ENCODE measurements at regions of chr3 and their contacts with region 1.

Region 1: DNA sequence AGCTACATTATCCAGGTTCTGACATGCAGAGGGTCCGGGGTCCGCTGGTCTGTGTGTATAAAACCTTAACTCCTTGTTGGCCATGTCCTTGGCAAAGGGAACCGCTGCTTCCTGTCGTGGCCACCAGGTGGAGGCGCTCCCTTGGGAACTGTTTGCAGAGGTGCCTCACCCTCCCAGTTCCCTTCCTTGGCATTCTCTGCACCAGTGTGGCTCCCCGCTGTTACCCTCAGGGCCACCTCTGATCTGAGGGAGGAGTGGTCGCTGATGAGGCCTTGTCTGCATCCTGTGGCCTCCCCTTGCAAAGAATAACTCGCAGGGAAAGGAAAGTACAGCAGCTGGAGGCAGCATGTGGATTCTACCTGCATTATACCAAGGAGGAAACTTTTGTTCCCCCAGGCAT is 89.6 kb downstream of the CHRD start:
- DNase-seq: peak; percentile 35
- H3K4me3 ChIP-seq: no peak overlapping the region
- H3K27ac ChIP-seq: no peak overlapping the region
- H3K4me1 ChIP-seq: peaks cover 10% of the 10 kb centered on the region
- H3K27me3 ChIP-seq: no peaks in the 10 kb centered on the region
- CTCF ChIP-seq: peak; percentile 84 to 97

Region 2: DNA sequence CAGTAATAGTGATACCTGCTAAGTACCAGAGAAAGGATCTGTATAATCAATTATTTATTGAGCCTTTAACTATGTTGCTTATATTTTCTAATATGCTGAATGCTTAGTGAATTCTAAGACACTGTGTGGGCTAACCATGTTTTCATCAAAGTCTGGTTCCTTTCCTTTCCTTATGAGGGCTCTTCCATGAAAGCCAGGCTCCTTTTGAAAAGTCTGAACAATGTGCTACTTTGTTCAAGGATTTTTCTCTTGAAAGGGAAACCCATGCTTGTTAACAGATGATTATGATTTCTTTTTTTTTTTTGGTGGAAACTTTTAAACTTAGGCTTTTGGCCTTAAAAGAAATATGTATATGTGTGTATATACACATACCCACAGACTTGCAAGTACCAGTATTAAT is 754.8 kb before region 1 on chr3:
- CTCF ChIA-PET with region 1: no interaction called
- dilution Hi-C with region 1: no loop called
- in situ Hi-C with region 1: no loop called
- intact Hi-C with region 1: no loop called
- DNase-seq: no peak
- H3K4me3 ChIP-seq: no peak overlapping the region
- H3K27ac ChIP-seq: no peak overlapping the region
- H3K4me1 ChIP-seq: no peaks in the 10 kb centered on the region
- H3K27me3 ChIP-seq: no peaks in the 10 kb centered on the region
- CTCF ChIP-seq: no peak

Region 3: DNA sequence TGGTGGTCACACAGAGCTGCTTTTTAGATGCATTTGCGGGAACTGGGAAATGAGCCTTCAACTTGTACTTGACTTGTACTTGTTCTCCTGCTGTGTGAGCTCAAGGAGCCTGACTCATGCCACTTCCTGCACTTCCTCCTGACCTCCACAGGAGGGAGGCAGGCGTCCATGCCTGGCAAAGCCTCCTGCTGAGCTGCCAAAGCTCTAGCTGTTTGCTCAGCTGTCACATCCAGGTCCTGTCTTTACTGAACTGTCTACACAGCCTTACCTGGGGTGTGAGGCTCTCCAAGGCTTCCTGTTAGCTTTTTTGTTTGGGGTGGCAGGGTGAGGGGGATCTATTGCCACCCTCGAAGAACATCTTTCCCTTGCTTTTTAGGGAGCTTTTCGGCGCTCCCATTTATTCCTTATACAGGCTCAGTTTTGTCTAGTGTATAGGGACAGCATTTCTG is 97.8 kb before region 1 on chr3:
- CTCF ChIA-PET with region 1: interaction called, 13 read pairs
- dilution Hi-C with region 1: no loop called
- in situ Hi-C with region 1: no loop called
- intact Hi-C with region 1: loop called (anchors 1 kb)
- DNase-seq: peak; percentile 73
- H3K4me3 ChIP-seq: no peak overlapping the region
- H3K27ac ChIP-seq: no peak overlapping the region
- H3K4me1 ChIP-seq: peaks cover 4% of the 10 kb centered on the region
- H3K27me3 ChIP-seq: no peaks in the 10 kb centered on the region
- CTCF ChIP-seq: peak; percentile 98 to 99

Region 4: DNA sequence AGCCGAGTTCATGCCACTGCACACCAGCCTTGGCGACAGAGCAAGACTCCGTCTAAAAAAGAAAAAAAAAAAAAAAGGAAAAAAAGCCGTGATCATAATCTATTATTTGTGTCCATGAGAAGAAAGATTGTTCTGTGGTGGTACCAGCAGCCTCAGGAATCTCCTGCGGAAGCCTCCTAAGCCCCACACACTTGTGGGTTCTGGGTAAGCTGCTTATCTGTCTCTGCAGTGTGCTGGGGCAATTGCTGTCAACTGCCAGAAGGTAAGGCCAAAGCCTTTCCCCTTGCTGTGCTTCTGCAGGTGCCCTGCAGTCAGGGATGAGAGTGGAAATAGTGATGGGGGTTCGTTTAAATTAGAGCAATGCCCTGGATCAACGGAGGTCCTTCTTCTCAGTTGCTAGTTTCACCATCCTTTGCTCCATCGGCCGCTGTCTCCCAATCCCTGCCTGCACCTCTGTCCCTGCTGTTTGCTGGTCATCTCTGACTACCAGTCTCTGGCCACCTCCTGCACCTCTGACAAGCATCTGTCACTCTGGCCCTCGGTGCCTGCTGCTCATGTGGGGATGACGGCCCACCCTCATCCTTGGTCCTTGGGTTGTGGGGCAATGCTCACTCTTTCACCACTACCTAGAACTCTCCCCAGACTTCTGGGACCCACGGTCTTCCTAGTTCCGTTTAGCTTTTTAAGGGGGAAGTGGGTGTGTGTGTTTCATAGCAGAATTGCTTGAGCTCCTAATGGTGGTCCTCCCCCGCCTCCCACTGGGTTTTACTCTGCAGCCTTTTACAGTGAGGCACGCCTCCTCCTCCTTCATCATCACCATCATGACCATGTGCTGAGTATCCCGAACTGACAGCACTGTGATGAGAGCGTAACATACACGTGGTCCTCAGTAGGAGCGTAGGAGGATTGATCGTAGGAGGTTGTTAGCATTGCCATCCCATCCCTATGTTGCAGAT is 64.1 kb before region 1 on chr3:
- CTCF ChIA-PET with region 1: no interaction called
- dilution Hi-C with region 1: no loop called
- in situ Hi-C with region 1: no loop called
- intact Hi-C with region 1: no loop called
- DNase-seq: no peak
- H3K4me3 ChIP-seq: no peak overlapping the region
- H3K27ac ChIP-seq: no peak overlapping the region
- H3K4me1 ChIP-seq: no peaks in the 10 kb centered on the region
- H3K27me3 ChIP-seq: no peaks in the 10 kb centered on the region
- CTCF ChIP-seq: no peak

Region 5: GRCh38 chr3:184417619-184418327 is 51.6 kb before region 1 on chr3:
- CTCF ChIA-PET with region 1: interaction called, 16 read pairs
- dilution Hi-C with region 1: loop called (anchors 5 kb)
- in situ Hi-C with region 1: loop called (anchors 5 kb)
- intact Hi-C with region 1: loop called (anchors 1 kb)
- DNase-seq: peak; percentile 51
- H3K4me3 ChIP-seq: no peak overlapping the region
- H3K27ac ChIP-seq: no peak overlapping the region
- H3K4me1 ChIP-seq: no peaks in the 10 kb centered on the region
- H3K27me3 ChIP-seq: no peaks in the 10 kb centered on the region
- CTCF ChIP-seq: peak; percentile 96 to 98

Region 6: GRCh38 chr3:184448311-184449160 is 20.9 kb before region 1 on chr3:
- CTCF ChIA-PET with region 1: no interaction called
- dilution Hi-C with region 1: no loop called
- in situ Hi-C with region 1: no loop called
- intact Hi-C with region 1: loop called (anchors 2 kb)
- DNase-seq: peak; percentile 98
- H3K4me3 ChIP-seq: no peak overlapping the region
- H3K27ac ChIP-seq: no peak overlapping the region
- H3K4me1 ChIP-seq: peaks cover 12% of the 10 kb centered on the region
- H3K27me3 ChIP-seq: no peaks in the 10 kb centered on the region
- CTCF ChIP-seq: no peak

Region 7: DNA sequence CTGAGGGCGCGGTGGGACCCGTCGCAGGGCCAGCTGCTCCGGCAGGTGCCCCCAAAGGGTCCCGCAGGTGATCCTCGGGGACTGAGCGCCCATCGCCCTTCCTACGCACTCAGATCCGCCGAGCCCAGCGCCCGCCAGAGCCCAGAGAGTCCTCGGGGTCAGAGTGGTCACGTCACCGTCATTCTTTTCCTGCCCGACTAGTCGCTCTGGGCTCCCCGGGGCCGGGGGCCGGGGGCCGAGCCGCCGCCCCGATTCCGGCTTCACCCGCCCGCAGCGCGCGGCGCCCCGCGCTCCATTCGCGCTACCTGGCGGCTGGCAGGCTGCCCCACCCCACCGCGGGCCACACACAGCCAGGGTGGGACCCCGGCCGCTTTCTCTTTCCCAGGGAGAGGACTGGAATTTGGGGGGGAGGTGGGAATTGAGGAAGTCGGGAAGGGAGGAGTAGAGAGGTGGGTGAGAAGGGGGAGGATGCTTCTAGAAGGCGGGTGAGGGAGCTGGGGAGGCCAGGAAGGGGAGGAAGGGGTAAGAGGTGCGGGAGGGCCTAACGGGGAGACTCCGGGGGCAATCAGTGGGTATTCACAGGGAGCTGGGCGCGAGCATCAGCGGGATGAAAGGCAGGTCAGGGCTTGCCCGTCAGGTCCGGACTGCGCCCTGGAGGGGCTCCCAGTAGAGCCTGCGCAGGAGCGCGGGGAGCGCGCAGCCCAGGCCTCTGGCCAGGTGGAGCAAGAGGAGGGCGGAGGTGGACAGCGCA is 56.1 kb after region 1 on chr3:
- CTCF ChIA-PET with region 1: no interaction called
- dilution Hi-C with region 1: no loop called
- in situ Hi-C with region 1: loop called (anchors 5 to 10 kb)
- intact Hi-C with region 1: no loop called
- DNase-seq: no peak
- H3K4me3 ChIP-seq: peak overlapping the region; percentile 31 to 66 (median 48)
- H3K27ac ChIP-seq: peak overlapping the region; percentile 57
- H3K4me1 ChIP-seq: peaks cover 25% of the 10 kb centered on the region
- H3K27me3 ChIP-seq: no peaks in the 10 kb centered on the region
- CTCF ChIP-seq: no peak

Region 8: GRCh38 chr3:184543843-184544512 is 74.6 kb after region 1 on chr3:
- CTCF ChIA-PET with region 1: no interaction called
- dilution Hi-C with region 1: loop called (anchors 5 kb)
- in situ Hi-C with region 1: loop called in 1 of 2 experiments (anchors 10 kb)
- intact Hi-C with region 1: loop called (anchors 1 kb)
- DNase-seq: peak; percentile 72
- H3K4me3 ChIP-seq: no peak overlapping the region
- H3K27ac ChIP-seq: no peak overlapping the region
- H3K4me1 ChIP-seq: peaks cover 2% of the 10 kb centered on the region
- H3K27me3 ChIP-seq: no peaks in the 10 kb centered on the region
- CTCF ChIP-seq: peak; percentile 84 to 86

Measured in mammary epithelial cell (primary cell).